Heart right ventricle (tissue), 16 donors: ENCODE measurements at regions of chr4 and their contacts with region 1.

Region 1: GRCh38 chr4:121656269-121656641 is 40.5 kb downstream of the ANXA5 start:
- DNase-seq: peak in 1 of 2 donors; percentile 60
- ATAC-seq: peak in 7 of 8 donors; percentile 58 to 88 (median 81)
- H3K4me3 ChIP-seq: no peak overlapping the region
- H3K27ac ChIP-seq: no peak overlapping the region
- H3K4me1 ChIP-seq: peaks cover 0 to 9% (median 0%) of the 10 kb centered on the region in 9 donors
- H3K27me3 ChIP-seq: no peaks in the 10 kb centered on the region
- CTCF ChIP-seq: peak in 8 of 9 donors; percentile 22 to 55 (median 42)

Region 2: DNA sequence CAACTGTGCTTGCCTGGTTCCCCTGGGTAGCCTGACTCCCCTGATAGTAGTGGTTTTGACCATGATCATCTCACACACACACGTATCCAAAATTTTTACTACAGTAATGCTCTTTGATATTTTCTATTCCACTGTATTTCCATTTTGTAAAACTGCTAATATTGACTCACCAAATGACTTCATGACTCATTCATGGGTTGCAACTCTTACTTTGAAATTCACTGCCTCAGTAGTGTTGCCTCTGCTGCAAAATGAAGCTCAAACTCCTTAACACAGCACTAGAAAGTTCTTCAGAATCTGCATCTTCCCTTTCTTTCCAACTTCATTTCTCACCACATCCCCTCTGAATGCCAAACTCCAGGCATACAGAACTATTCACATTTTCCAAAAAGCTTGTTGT is 295.8 kb before region 1 on chr4:
- intact Hi-C with region 1: loop called in 1 of 10 experiments (anchors 10 kb)
- DNase-seq: no peak
- ATAC-seq: no peak
- H3K4me3 ChIP-seq: no peak overlapping the region
- H3K27ac ChIP-seq: no peak overlapping the region
- H3K4me1 ChIP-seq: peaks cover 0 to 7% (median 0%) of the 10 kb centered on the region in 9 donors
- H3K27me3 ChIP-seq: no peaks in the 10 kb centered on the region
- CTCF ChIP-seq: no peak

Region 3: GRCh38 chr4:121457278-121457875 is 198.9 kb before region 1 on chr4:
- intact Hi-C with region 1: loop called in 7 of 10 experiments (anchors 1 to 10 kb)
- DNase-seq: no peak
- ATAC-seq: no peak
- H3K4me3 ChIP-seq: no peak overlapping the region
- H3K27ac ChIP-seq: no peak overlapping the region
- H3K4me1 ChIP-seq: peaks cover 0 to 15% (median 2%) of the 10 kb centered on the region in 9 donors
- H3K27me3 ChIP-seq: no peaks in the 10 kb centered on the region
- CTCF ChIP-seq: no peak

Region 4: GRCh38 chr4:121484633-121485032 is 171.6 kb before region 1 on chr4:
- intact Hi-C with region 1: loop called in 8 of 10 experiments (anchors 2 to 10 kb)
- DNase-seq: no peak
- ATAC-seq: peak in 7 of 8 donors; percentile 53 to 87 (median 73)
- H3K4me3 ChIP-seq: no peak overlapping the region
- H3K27ac ChIP-seq: no peak overlapping the region
- H3K4me1 ChIP-seq: no peaks in the 10 kb centered on the region
- H3K27me3 ChIP-seq: no peaks in the 10 kb centered on the region
- CTCF ChIP-seq: peak; percentile 35 to 76 (median 63)

Region 5: DNA sequence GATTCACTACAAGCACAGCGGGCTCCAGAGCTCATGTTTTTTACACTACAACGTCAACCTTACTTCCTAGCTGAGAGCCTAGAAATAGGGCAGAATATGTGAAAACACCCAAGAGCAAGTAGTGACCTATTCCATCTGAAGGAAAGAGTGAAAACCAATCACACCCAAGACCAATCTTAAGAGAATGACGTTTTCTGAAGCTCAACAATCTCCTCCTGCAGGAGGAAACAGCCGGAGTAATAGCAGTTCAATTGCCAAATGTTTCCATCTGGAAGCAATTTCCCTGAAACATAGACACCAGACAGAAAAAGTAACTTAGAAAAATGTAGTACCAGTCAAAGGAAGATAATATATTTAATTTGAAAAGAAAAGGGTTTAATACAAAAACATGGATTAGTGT is 101.9 kb before region 1 on chr4:
- intact Hi-C with region 1: no loop called
- DNase-seq: peak in 1 of 2 donors; percentile 4
- ATAC-seq: peak in 7 of 8 donors; percentile 52 to 88 (median 81)
- H3K4me3 ChIP-seq: no peak overlapping the region
- H3K27ac ChIP-seq: peak overlapping the region in 7 of 10 donors; percentile 58 to 85 (median 65)
- H3K4me1 ChIP-seq: peaks cover 0 to 37% (median 13%) of the 10 kb centered on the region in 9 donors
- H3K27me3 ChIP-seq: no peaks in the 10 kb centered on the region
- CTCF ChIP-seq: no peak

Region 6: DNA sequence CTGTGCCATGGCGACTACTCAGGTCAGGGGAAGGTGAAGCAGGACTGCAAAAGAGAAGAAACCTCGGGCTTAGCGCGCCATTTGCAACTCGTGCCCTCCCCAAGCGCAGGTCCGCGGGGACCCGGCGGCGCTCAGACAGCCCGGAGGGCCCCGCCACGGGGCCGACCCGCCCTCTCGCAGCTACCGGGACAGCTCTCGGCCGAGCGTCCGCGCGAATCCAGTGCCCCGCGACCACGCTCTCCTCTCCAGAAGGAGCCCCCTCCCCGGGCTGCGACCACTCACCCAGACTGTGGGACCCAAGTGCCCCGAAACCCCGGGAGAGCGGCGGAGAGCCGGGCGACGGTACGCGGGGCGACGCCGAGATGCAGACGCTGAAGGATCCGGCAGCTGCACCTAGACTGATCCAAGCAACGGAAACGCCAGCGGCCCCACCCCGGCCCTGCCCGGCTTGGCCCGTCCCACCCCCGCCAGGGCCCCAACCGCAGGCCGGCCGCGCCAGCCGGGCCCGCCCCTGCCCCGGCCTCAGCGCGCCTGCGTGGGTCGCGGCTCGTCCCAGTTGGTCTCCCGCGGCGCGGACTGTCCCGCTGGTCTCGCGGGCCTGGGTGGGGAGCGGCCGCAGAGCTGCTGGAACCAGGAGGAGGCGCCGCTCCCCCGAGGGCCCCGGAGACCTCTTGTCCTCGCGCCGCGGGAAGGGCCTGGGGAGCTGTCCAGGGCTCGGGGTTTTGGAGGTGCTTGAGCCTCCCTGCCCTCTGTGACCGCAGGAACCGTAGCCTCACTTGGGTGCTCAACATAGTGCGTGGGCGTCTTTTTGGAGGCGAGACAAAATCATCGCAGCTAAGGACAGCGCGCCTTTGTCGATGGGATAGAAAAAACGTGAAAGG is 40.6 kb after region 1 on chr4 and contains the start of gene ANXA5:
- intact Hi-C with region 1: no loop called
- DNase-seq: peak; percentile 89 to 94
- ATAC-seq: peak; percentile 94 to 99 (median 96)
- H3K4me3 ChIP-seq: peak within 1 kb of the TSS; percentile 67 to 99 (median 95)
- H3K27ac ChIP-seq: peak within 1 kb of the TSS; percentile 94 to 99 (median 98)
- H3K4me1 ChIP-seq: peaks cover 0 to 59% (median 49%) of the 10 kb centered on the region in 9 donors
- H3K27me3 ChIP-seq: no peaks in the 10 kb centered on the region
- CTCF ChIP-seq: peak in 8 of 9 donors; percentile 18 to 69 (median 42)
- total RNA-seq, gene ANXA5: 90.8 to 204 (median 115) TPM